CD8-positive, alpha-beta T cell (primary cell): ENCODE measurements at regions of chr12 and their contacts with region 1.

Region 1: GRCh38 chr12:47361389-47362021 is 281.7 kb upstream of the AMIGO2 start:
- DNase-seq: peak in 7 of 9 experiments; percentile 19 to 76 (median 48)
- ATAC-seq: peak; percentile 42
- H3K4me3 ChIP-seq: peak overlapping the region; percentile 36 to 40
- H3K4me3 Mint-ChIP-seq: peak overlapping the region; percentile 79
- H3K27ac ChIP-seq: peak overlapping the region; percentile 64 to 94
- H3K27ac Mint-ChIP-seq: peak overlapping the region; percentile 96
- H3K4me1 ChIP-seq: peaks cover 71% of the 10 kb centered on the region
- H3K4me1 Mint-ChIP-seq: peaks cover 59% of the 10 kb centered on the region
- H3K27me3 ChIP-seq: no peaks in the 10 kb centered on the region
- H3K27me3 Mint-ChIP-seq: no peaks in the 10 kb centered on the region
- CTCF ChIP-seq: no peak

Region 2: DNA sequence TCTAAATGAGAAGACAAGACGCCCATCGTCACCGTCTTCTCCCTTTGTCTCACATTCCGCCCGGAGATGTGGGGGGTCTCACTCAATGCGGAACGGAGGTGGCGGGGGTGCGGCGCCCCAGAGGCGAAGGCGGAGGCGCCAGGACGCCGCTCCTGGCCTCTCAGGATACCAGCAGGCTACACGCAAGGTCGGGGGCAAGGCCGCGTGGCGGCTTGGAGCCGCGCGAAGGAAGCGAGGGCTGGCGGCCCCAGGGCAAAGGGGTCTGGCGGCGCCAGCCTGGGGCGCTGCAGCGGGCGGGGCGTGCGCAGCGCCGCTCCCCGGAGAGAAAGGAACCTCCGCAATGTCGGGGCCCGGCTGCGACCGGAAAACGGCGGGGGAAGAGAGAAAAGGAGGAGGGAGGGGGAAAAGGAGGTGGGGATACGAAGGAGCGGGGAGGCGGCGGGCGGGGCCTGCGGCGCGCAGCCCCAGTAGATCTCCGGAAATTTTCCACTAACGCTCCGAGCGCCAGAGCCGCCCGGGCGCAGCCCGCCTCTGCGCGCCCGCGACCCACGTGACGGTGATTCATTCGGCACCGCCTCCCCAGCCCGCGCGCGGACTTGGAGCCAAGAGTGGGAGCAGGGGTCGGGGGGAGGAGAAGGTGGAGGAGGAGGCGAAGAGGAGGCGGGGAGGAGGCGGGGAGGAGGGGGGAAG is 978.4 kb before region 1 on chr12:
- CTCF ChIA-PET with region 1: no interaction called
- POLR2A ChIA-PET with region 1: no interaction called
- intact Hi-C with region 1: loop called in 1 of 2 experiments (anchors 5 kb)
- DNase-seq: peak; percentile 70 to 97 (median 93)
- ATAC-seq: peak; percentile 76
- H3K4me3 ChIP-seq: peak overlapping the region; percentile 82 to 93
- H3K4me3 Mint-ChIP-seq: peak overlapping the region; percentile 90
- H3K27ac ChIP-seq: peak overlapping the region; percentile 91 to 93
- H3K27ac Mint-ChIP-seq: peak overlapping the region; percentile 96
- H3K4me1 ChIP-seq: peaks cover 38% of the 10 kb centered on the region
- H3K4me1 Mint-ChIP-seq: peaks cover 36% of the 10 kb centered on the region
- H3K27me3 ChIP-seq: no peaks in the 10 kb centered on the region
- H3K27me3 Mint-ChIP-seq: no peaks in the 10 kb centered on the region
- CTCF ChIP-seq: no peak

Region 3: GRCh38 chr12:47276621-47277309 is 84.7 kb before region 1 on chr12:
- CTCF ChIA-PET with region 1: interaction called, 4 read pairs
- POLR2A ChIA-PET with region 1: no interaction called
- intact Hi-C with region 1: loop called in 1 of 2 experiments (anchors 2 kb)
- DNase-seq: peak; percentile 35 to 91 (median 62)
- ATAC-seq: peak; percentile 94
- H3K4me3 ChIP-seq: peak overlapping the region in 1 of 2 experiments; percentile 25
- H3K4me3 Mint-ChIP-seq: peak overlapping the region; percentile 67
- H3K27ac ChIP-seq: peak overlapping the region; percentile 64 to 91
- H3K27ac Mint-ChIP-seq: peak overlapping the region; percentile 97
- H3K4me1 ChIP-seq: peaks cover 67% of the 10 kb centered on the region
- H3K4me1 Mint-ChIP-seq: peaks cover 80% of the 10 kb centered on the region
- H3K27me3 ChIP-seq: no peaks in the 10 kb centered on the region
- H3K27me3 Mint-ChIP-seq: no peaks in the 10 kb centered on the region
- CTCF ChIP-seq: no peak

Region 4: DNA sequence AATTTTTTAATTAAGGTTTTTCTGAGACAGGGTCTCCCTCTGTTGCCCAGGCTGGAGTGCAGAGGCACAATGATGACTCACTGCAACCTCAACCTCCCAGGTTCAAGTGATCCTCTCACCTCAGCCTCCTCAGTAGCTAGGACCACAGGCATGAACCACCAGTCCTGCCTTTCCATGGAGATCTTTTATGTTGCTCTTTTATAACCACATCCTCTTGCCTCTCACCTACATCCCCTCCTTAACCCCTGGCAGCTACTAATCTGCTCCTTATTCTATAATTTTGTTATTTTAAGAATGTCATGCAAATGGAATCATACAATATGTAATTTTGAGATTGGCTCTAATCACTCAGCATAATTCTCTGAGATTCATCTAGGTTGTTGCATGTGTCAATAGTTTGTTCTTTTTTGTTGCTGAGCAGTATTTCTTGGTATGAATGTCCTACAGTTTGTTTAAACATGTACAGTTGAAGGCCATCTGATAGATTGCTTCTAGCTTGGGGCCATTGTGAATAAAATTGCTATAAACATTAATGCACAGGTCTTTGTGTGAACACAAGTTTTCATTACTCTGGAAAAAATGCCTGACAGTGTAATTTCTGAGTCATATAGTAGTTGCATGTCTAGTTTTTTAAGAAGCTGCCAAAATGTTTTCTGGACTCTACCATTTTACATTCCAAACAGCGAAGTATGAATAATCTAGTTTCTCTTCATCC is 32.5 kb before region 1 on chr12:
- CTCF ChIA-PET with region 1: no interaction called
- POLR2A ChIA-PET with region 1: no interaction called
- intact Hi-C with region 1: loop called in 1 of 2 experiments (anchors 5 kb)
- DNase-seq: no peak
- ATAC-seq: peak; percentile 23
- H3K4me3 ChIP-seq: no peak overlapping the region
- H3K4me3 Mint-ChIP-seq: no peak overlapping the region
- H3K27ac ChIP-seq: no peak overlapping the region
- H3K27ac Mint-ChIP-seq: no peak overlapping the region
- H3K4me1 ChIP-seq: peaks cover 8% of the 10 kb centered on the region
- H3K4me1 Mint-ChIP-seq: peaks cover 26% of the 10 kb centered on the region
- H3K27me3 ChIP-seq: no peaks in the 10 kb centered on the region
- H3K27me3 Mint-ChIP-seq: no peaks in the 10 kb centered on the region
- CTCF ChIP-seq: no peak

Region 5: GRCh38 chr12:47391566-47391965 is 30.1 kb after region 1 on chr12:
- CTCF ChIA-PET with region 1: interaction called, 9 read pairs
- POLR2A ChIA-PET with region 1: interaction called, 5 read pairs
- intact Hi-C with region 1: loop called (anchors 2 kb)
- DNase-seq: peak; percentile 37 to 93 (median 69)
- ATAC-seq: peak; percentile 85
- H3K4me3 ChIP-seq: no peak overlapping the region
- H3K4me3 Mint-ChIP-seq: peak overlapping the region; percentile 46
- H3K27ac ChIP-seq: peak overlapping the region; percentile 74 to 76
- H3K27ac Mint-ChIP-seq: peak overlapping the region; percentile 100
- H3K4me1 ChIP-seq: peaks cover 58% of the 10 kb centered on the region
- H3K4me1 Mint-ChIP-seq: peaks cover 78% of the 10 kb centered on the region
- H3K27me3 ChIP-seq: no peaks in the 10 kb centered on the region
- H3K27me3 Mint-ChIP-seq: no peaks in the 10 kb centered on the region
- CTCF ChIP-seq: no peak